Sciatic nerve (tissue), 2 donors: ENCODE measurements at regions of chr9 and their contacts with region 1.

Region 1: DNA sequence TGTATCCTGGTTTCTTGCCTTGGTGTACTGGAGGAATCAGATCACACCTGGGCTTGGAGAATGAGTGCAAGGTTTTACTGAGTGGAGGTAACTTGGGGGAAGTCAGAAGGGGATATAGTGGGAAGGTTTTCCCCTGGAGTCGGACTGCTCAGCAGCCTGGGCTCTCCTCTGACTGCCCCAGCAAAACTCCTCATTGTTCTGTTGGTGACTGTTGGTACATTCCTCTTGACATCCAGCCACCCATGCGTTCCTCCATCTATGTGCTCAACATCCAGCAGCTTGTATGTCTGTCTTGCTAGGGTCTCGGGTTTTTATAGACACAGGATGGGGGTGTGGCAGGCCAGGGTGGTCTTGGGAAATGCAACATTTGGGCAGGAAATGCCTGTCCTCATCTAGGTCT is 96.0 kb downstream of the ZFAND5 start:
- DNase-seq: no peak
- ATAC-seq: no peak

Region 2: GRCh38 chr9:72041775-72042194 is 227.2 kb before region 1 on chr9:
- intact Hi-C with region 1: loop called (anchors 2 kb)
- DNase-seq: peak; percentile 63
- ATAC-seq: no peak

Region 3: DNA sequence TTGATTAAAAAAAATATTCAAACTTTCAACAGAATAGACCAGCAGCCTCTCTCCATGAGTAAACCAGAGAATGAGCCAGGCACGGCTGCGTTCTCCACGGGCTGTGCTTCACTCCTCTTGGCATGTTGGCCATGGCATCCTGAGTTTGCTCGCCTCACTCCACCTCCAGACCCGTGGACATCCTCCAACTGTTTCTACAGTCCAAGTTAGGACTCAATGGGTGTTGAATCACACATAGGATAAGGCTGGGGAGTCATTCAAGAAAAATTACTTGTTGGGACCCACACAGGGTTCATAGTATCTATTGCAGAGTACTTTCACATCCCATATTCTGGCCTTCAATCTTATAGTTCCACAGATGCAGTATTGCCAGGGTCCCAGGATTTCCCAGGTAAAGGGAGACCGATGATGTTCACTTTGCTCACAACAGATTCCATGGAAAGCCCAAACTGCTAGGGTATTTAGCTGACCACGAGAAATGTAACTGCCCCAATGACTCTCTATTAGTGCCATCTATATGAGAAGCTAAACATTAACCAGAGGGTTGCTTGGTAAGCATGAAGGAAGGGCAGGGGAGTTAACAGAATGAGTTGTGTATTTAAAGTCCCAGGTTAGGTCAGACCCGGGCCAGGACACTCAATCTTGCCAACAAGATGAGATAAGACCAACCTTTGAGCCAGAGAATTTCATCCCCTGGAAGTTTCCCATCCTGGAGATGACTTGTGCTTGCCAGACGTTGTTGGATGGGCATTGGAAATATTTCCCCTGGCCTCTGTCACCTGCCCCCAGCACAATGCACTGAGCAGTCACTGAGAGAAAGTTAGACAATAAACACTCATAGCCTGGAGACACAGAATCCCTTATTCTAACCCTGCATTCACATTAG is 139.4 kb before region 1 on chr9:
- intact Hi-C with region 1: no loop called
- DNase-seq: no peak
- ATAC-seq: no peak

Region 4: DNA sequence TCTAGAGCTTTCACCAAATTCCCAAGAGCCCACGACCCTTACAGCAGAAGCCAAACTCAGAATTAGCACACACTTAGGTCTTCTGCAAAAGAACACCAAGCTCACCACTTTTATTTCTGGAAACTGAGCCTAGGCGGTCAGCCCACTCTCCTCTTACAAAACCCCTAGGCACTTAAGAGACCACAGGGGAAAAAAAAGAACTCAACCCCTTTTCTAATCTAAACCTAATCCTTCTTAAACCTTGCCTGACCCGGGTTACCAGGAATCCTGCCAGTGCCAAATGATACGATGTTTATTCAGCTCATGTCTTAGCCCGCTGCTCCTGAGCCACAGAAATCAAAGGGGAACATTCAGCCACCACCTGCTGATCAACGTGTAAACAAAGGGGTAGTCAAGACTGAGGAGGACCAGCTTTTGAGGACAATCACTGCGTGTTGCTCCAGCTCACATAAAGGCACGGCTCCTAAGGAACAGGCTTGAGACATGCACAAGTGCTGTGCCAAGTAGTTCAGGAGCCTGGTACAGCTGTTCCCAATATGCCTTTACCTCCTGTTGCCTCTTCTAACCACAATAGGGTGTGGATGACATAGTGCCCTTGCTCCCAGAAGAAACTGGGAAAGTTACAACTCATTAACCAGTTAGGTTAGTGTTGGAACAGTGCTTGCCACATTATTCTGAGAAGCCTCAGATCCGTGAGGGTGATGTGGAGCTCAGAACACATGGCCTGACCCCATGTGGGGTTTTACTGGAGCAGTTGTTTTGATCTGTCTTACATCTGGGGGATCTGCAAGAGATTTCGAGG is 46.8 kb after region 1 on chr9:
- intact Hi-C with region 1: no loop called
- DNase-seq: no peak
- ATAC-seq: peak; percentile 92

Region 5: DNA sequence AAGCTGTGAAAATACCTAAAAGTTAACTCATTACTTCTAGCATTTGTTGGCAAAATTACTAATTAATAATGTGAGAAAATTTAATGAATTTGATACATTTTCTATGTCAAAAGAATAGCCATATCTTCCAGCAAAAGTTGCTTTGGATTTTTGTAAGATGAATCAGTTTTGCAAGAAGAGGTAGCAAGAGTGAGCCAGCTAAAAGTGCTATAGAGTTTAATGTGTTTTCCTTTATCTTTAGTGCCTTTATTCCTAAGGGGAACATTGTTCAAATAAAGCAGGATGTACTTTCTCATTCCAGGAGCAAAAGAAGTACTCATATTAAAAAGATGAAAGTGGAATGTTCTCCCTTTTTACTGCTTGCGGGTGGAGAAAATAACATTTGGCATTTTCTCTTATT is 1504.9 kb after region 1 on chr9:
- intact Hi-C with region 1: no loop called
- DNase-seq: no peak
- ATAC-seq: no peak